Head of caudate nucleus (tissue), 42 donors: ENCODE measurements at regions of chr4 and their contacts with region 1.

Region 1: GRCh38 chr4:103008875-103009729 is 10.4 kb downstream of the SLC9B1 start:
- DNase-seq: peak in 8 of 42 donors; percentile 22 to 73 (median 36)

Region 2: GRCh38 chr4:102620697-102621497 is 388.2 kb before region 1 on chr4:
- intact Hi-C with region 1: loop called (anchors 5 kb)
- DNase-seq: peak in 24 of 42 donors; percentile 18 to 77 (median 36)

Region 3: DNA sequence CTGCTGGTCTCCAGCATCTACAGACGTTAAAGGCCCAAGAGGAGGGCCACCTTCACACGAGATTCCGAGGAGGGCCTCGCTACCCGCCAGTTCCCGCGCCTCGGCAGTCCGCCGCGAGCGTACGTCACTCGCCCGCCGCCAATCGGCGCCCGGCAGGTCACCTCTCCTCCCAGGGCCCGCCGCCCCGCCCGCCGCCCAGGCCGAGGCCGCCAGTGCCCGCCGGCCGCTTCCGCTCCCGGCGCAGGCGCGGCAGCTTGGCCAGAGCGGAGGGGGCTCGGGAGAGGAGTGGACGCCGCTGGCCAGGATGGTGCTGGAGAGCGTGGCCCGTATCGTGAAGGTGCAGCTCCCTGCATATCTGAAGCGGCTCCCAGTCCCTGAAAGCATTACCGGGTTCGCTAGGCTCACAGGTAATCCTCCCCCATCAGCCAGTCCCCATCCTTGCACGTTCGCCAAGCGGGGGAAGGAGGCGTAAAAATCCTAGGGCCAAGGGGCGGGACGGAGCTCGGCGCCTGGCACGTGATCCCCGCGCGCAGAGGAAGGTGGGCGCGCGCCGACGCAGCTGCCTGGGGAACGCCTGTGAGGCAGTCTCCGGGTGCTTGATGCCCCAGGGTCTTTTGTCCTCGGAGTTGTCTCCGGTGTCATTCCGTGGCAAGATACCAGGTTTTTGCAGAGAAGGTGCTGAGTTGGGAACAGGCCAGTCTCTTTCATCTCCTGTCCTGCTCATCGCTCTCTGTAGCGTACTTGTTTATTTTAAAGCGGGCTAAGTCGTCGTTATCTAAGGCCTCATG is 140.1 kb before region 1 on chr4 and contains the start of gene CISD2:
- intact Hi-C with region 1: loop called (anchors 10 kb)
- DNase-seq: peak; percentile 79 to 97 (median 94)

Region 4: DNA sequence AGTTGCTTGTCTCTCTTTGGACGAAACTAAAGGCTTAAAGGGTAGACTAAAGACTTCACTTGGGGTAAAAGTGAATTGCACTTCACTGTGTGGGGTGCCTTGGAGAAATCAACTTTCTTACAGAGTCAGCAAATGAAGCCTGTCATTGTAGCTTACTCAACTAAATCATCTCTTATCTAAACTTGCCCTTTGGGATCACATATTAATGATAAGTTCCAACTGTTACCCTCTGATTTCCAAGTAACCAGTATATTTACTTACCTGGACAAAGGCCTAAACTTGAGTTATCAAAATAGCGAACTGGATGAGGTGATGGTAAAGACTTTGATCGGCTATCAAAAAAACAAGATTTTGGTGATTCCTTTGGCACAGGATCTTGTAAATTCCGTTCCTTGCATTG is 99.4 kb after region 1 on chr4:
- intact Hi-C with region 1: no loop called
- DNase-seq: no peak